ENCODE measurements at regions of chr5 and their contacts with region 1.

Region 1: DNA sequence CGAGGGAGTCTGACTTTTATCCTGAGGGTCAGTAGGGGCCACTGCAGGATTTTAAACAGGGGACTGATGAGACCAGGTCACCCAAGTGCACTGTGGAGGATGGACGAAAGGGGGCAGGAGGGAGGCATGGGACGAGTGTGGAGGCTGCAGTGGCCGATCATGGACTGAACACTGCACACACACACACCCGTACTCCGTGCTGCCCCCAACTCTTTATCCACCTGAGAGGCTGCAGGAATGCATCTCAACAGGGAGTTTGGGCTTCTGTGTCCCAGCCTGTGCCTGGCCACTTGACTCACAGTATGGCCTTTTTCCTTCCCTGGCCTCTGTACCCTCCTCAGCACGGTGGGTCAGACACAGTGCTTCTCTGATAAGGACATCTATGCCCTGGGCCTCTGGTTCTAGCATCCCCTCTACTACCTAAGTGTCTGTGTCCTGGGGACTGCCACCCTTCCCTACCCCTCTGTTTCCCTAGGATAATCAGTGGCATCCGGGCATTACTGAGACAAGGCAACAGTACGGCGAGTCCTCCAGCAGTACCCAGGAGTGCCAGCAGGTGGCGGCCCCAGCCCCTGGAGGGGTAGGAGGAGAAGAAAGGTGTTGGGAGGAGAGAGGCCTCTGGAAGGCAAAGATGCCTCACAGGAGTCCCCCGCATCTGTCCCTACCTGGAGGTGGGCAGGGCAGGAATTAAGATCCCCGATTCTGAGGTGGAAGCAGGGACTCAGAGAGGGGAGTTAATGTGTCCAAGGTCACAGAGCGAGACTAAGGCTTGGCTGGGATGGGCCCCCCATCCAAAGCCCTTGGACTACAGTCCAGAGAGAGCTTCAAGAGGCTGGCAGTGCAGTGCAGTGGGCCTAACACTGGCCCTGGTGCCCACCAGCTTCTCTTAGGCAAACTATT is 5.1 kb upstream of the CDX1 start:
- DNase-seq: peak; percentile 86
- CTCF ChIP-seq: peak; percentile 87

Region 2: DNA sequence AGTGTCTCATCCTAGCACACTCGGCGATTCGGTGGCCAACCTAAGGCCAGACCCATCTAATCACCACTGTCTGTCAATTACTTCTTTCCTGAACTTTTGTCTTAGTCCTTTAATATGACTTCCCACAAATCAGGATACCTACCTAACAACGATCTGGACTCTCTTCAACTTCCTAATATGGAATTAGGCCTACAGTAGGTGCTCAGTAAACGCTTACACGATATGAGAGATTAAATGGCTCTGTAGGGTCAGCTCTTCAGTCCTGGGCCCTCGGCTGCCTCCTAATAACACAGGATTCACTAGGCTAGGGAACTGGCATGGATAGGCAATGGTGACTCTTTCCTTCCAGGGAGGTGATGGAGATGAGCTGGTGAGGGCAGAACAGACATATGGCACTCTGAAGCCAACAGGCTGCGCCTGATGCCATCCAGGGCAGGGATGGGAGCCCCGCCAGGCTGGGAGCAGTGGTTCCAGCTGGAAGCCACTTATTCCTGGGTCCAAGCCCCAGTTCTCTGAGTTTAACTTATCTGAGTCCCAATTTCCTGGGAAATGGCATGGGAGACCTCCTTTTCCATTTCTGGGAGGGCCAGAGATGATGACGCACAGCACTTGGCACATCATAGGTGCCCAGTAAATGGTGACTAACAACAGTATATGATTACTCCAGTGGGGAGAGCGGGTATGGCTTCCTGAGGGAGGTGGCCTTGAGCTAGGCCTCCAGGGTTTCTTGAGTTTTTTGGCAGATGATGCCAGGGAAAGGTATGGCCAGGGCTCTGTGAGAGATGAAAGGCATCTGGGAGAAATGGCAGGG is 13.2 kb before region 1 on chr5:
- CTCF ChIA-PET with region 1: interaction called, 21 read pairs
- POLR2A ChIA-PET with region 1: no interaction called
- DNase-seq: no peak
- CTCF ChIP-seq: no peak

Region 3: DNA sequence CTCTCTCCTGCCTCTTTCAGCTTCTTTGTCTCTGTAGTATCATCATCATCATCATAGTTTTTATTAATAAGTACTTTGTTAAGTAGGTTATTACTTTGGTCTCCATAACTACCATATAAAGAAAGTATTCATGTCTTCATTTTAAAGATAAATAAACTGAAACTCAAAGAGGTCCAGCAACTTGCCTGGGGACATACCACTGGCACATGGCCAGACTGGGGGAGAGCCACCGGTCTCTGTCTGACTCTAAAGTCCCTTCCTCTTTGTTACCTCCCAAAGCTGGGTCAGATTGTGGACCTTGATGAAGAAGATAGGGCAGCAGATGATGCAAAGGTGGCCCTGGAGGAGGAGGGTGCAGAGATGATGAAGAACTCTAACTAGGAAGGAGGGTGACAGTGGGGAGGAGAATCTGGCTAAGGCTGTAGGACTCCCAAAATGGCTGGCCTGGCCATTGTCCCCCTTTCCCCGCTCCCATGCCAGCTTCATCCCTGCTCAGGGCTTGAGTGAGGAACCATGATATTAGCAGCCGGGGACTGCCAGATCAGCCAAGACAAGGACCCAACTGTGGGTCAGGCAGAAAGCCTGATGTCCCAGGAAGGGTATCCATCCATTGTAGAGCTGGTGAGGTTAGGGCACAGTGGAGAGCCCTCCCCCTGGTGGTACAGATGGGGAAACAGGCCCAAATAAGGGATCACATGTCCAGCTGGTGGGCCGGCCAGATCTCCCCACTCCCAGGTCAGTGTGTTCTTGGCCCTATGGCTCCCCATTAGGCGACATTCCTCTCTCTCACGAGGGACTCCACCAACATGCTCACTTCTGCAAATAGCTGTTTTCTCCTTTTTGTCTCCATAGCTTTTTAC is 13.8 kb after region 1 on chr5:
- CTCF ChIA-PET with region 1: interaction called, 22 read pairs
- POLR2A ChIA-PET with region 1: no interaction called
- DNase-seq: peak; percentile 59
- CTCF ChIP-seq: peak; percentile 45

Region 4: GRCh38 chr5:150497274-150497988 is 335.9 kb after region 1 on chr5:
- CTCF ChIA-PET with region 1: no interaction called
- POLR2A ChIA-PET with region 1: no interaction called
- DNase-seq: no peak
- CTCF ChIP-seq: no peak

Measured in GM10248 (cell line).